CD8-positive, alpha-beta T cell (primary cell): ENCODE measurements at regions of chr20 and their contacts with region 1.

Region 1: GRCh38 chr20:24960302-24960801 is 11.3 kb downstream of the CST7 start:
- DNase-seq: peak in 1 of 9 experiments; percentile 27
- ATAC-seq: no peak
- H3K4me3 ChIP-seq: no peak overlapping the region
- H3K4me3 Mint-ChIP-seq: no peak overlapping the region
- H3K27ac ChIP-seq: peak overlapping the region; percentile 63 to 97
- H3K27ac Mint-ChIP-seq: peak overlapping the region; percentile 91
- H3K4me1 ChIP-seq: peaks cover 48% of the 10 kb centered on the region
- H3K4me1 Mint-ChIP-seq: peaks cover 50% of the 10 kb centered on the region
- H3K27me3 ChIP-seq: no peaks in the 10 kb centered on the region
- H3K27me3 Mint-ChIP-seq: no peaks in the 10 kb centered on the region
- CTCF ChIP-seq: no peak

Region 2: DNA sequence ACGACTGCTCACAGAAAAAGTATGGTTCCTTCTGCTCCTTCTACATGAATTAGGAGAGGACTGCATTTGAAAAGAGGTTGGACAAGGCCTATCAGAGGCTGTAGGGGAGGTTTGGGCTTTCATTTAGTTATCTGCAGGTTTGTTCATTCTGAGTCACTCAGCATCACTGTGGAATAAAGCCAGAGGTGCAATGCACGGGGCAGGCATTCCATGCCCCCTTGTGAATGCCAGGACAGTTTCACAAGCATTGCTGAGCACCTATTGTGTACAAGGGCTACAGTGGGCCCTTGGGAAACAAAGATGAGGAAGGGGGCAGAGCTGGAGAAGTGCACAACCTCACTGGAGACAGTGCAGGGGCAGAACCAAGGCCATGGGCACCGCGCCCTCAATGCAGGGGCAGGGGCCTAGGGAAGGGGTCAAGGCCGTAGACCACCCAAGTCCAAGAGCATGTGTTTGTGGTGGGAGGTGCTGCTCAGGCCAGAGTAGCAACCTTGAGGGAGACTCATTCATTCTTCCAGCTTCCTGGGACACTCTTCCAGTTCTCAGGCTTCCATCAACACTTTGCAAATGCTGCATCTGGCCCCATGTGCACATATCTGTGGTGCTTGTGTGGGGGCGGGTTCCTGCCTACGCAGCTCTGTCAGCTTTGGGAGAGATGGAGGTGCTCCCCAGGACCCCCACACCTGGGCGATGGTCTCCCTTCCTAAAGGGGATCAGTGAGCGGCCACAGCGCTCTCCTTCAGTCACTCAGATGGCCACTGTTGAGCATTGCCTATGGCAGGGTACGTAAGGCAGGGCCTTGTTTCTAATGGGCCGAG is 286.5 kb before region 1 on chr20:
- CTCF ChIA-PET with region 1: no interaction called
- POLR2A ChIA-PET with region 1: no interaction called
- intact Hi-C with region 1: no loop called
- DNase-seq: no peak
- ATAC-seq: no peak
- H3K4me3 ChIP-seq: no peak overlapping the region
- H3K4me3 Mint-ChIP-seq: no peak overlapping the region
- H3K27ac ChIP-seq: no peak overlapping the region
- H3K27ac Mint-ChIP-seq: no peak overlapping the region
- H3K4me1 ChIP-seq: no peaks in the 10 kb centered on the region
- H3K4me1 Mint-ChIP-seq: no peaks in the 10 kb centered on the region
- H3K27me3 ChIP-seq: no peaks in the 10 kb centered on the region
- H3K27me3 Mint-ChIP-seq: no peaks in the 10 kb centered on the region
- CTCF ChIP-seq: no peak

Region 3: DNA sequence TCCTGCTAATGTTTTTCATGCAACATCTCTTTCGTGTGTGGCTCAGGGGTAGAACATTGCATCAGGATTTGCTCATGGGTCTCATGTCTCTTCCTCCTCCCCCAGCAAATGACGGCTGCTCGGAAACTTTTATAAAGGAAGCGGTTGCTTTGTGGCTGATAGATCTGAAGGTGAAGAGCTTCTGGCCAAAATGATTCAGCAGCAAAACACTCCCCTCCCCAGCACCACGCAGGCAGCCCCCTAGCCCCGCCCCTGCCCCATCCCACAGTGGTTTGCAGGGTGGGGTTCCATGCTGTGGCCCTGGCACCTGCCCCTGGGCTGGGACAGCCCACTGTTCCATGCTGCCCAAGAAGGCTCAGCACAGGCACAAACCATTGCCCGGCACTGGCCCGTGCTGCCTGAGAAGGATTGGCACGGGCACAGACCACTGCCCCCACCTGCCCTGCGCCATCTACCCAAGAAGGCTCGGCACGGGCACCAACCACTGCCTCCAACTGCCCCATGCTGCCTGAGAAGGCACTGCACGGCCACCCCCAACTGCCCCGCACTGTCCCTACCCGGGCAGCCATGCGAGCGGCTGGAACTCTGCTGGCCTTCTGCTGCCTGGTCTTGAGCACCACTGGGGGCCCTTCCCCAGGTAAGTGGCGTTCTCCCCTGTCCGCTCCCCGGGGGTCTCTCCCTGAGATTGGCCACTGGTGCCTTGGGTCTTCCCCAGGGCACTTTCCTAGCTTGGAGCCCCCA is 11.2 kb before region 1 on chr20 and contains the start of gene CST7:
- CTCF ChIA-PET with region 1: interaction called, 5 read pairs
- POLR2A ChIA-PET with region 1: interaction called, 6 read pairs
- intact Hi-C with region 1: loop called in 1 of 2 experiments (anchors 1 kb)
- DNase-seq: peak; percentile 76 to 96 (median 87)
- ATAC-seq: peak; percentile 90
- H3K4me3 ChIP-seq: peak within 1 kb of the TSS; percentile 55 to 90
- H3K4me3 Mint-ChIP-seq: peak within 1 kb of the TSS; percentile 86
- H3K27ac ChIP-seq: peak within 1 kb of the TSS; percentile 73 to 95
- H3K27ac Mint-ChIP-seq: peak within 1 kb of the TSS; percentile 93
- H3K4me1 ChIP-seq: peaks cover 23% of the 10 kb centered on the region
- H3K4me1 Mint-ChIP-seq: peaks cover 63% of the 10 kb centered on the region
- H3K27me3 ChIP-seq: no peaks in the 10 kb centered on the region
- H3K27me3 Mint-ChIP-seq: no peaks in the 10 kb centered on the region
- CTCF ChIP-seq: no peak
- total RNA-seq, gene CST7: 53.3 to 54.6 TPM